HEK293T (cell line): ENCODE measurements at regions of chr18 and their contacts with region 1.

Region 1: DNA sequence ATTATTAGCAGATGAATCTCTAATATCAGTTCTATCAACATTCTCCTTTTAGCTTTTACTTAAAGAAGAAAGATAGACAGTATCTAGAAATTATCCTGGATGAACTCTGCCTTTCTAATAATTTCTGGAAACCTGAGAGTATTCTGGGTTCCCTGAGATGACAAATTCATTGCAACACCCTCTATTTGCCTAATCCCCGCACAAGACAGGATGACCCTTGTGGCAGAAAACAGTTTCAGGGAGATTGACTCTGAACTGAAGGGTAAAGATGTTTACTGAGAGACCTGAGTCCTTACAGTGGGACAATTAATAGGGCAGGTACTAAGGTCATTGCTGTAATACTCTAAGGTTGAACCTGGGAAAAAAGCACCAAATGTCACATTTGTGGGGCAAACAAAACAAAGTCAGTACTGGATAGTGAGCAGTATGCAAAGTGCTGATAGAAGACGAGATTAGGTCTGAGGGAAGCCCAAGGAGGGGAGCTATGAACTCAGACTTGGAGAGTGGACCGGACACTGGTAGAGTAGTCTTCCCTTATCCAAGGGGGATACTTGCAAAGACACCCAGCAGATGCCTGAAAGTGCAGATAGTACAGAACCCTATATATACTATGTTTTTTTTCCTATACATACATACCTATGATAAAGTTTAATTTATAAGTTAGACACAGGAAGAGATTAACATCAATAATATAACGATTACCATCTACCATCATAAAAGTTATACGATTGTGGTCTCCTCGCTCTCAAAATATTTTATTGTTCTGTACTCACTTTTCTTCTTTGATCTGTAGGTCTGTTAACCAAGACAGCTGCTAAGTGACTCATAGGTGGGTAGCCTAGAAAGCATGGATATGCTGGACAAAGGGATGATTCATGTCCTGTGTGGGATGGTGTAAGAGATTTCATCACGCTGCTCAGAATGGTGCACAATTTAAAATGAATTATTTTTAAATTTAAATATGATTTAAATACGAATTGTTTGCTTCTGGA is 148.3 kb upstream of the KLHL14 start:
- DNase-seq: no peak

Region 2: GRCh38 chr18:32714571-32715148 is 206.4 kb before region 1 on chr18:
- CTCF ChIA-PET with region 1: interaction called, 12 read pairs
- POLR2A ChIA-PET with region 1: no interaction called
- DNase-seq: peak; percentile 87